ENCODE measurements at regions of chr3 and their contacts with region 1.

Region 1: GRCh38 chr3:113745273-113746068 is 578 bp downstream of the NAA50 start:
- DNase-seq: peak; percentile 57 to 77 (median 71)
- ATAC-seq: peak; percentile 52 to 73 (median 70)
- H3K4me3 ChIP-seq: peak overlapping the region; percentile 63 to 95 (median 85)
- H3K27ac ChIP-seq: peak overlapping the region; percentile 94 to 100 (median 98)
- H3K4me1 ChIP-seq: peaks cover 6 to 71% (median 36%) of the 10 kb centered on the region in 12 donors
- H3K27me3 ChIP-seq: no peaks in the 10 kb centered on the region
- CTCF ChIP-seq: peak; percentile 23 to 68 (median 59)
- POLR2A ChIP-seq: no peak

Region 2: GRCh38 chr3:113495035-113495434 is 250.4 kb before region 1 on chr3:
- intact Hi-C with region 1: loop called in 5 of 10 experiments (anchors 5 to 10 kb)
- DNase-seq: no peak
- ATAC-seq: no peak
- H3K4me3 ChIP-seq: no peak overlapping the region
- H3K27ac ChIP-seq: no peak overlapping the region
- H3K4me1 ChIP-seq: no peaks in the 10 kb centered on the region
- H3K27me3 ChIP-seq: no peaks in the 10 kb centered on the region
- CTCF ChIP-seq: peak in 11 of 12 donors; percentile 10 to 56 (median 41)
- POLR2A ChIP-seq: no peak

Region 3: GRCh38 chr3:113696658-113697499 is 48.6 kb before region 1 on chr3:
- intact Hi-C with region 1: loop called in 6 of 10 experiments (anchors 1 to 5 kb)
- DNase-seq: peak; percentile 99 to 100 (median 99)
- ATAC-seq: peak; percentile 96 to 99 (median 97)
- H3K4me3 ChIP-seq: peak overlapping the region; percentile 56 to 100 (median 87)
- H3K27ac ChIP-seq: peak overlapping the region; percentile 96 to 100 (median 100)
- H3K4me1 ChIP-seq: peaks cover 2 to 45% (median 26%) of the 10 kb centered on the region in 12 donors
- H3K27me3 ChIP-seq: no peaks in the 10 kb centered on the region
- CTCF ChIP-seq: peak in 7 of 12 donors; percentile 23 to 54 (median 29)
- POLR2A ChIP-seq: no peak

Region 4: GRCh38 chr3:113758389-113759024 is 13.0 kb after region 1 on chr3:
- intact Hi-C with region 1: no loop called
- DNase-seq: no peak
- ATAC-seq: no peak
- H3K4me3 ChIP-seq: no peak overlapping the region
- H3K27ac ChIP-seq: no peak overlapping the region
- H3K4me1 ChIP-seq: peaks cover 0 to 16% (median 2%) of the 10 kb centered on the region in 12 donors
- H3K27me3 ChIP-seq: no peaks in the 10 kb centered on the region
- CTCF ChIP-seq: no peak
- POLR2A ChIP-seq: no peak

Region 5: DNA sequence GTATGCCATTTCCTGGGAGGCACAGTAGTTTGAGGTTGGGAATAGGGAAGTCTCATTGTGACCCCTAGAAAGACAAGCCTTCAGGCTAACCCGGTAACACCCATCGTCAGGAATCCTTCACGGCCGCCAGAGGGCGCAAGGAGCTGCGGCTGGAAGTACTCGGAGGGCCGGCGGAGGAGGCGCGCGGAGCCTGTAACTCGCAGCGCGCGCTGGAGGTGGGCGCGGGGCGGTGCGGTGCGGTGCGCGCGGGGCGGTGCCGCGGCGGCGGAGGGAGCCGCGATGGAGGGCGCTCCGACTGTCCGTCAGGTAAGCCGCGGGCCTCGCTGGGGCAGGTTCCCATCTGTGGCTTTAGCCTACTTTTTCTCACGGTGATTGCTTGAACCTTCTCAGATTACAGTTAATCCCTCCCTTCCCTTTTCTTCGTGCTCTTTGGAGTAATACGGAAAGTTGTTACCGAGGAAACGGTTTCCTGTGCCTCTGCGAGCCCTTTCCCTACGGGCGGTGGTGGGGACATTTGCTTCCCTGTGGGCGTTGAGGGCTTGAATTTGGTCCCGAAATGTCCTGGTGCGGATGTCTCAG is 93.2 kb after region 1 on chr3 and contains the start of gene GRAMD1C:
- intact Hi-C with region 1: loop called in 3 of 10 experiments (anchors 2 to 10 kb)
- DNase-seq: peak; percentile 85 to 94 (median 86)
- ATAC-seq: peak; percentile 68 to 100 (median 98)
- H3K4me3 ChIP-seq: peak within 1 kb of the TSS; percentile 33 to 66 (median 56)
- H3K27ac ChIP-seq: peak within 1 kb of the TSS in 7 of 12 donors; percentile 5 to 61 (median 49)
- H3K4me1 ChIP-seq: peaks cover 0 to 8% (median 0%) of the 10 kb centered on the region in 12 donors
- H3K27me3 ChIP-seq: no peaks in the 10 kb centered on the region
- CTCF ChIP-seq: peak; percentile 71 to 94 (median 87)
- POLR2A ChIP-seq: peak in 1 of 2 donors; percentile 21
- total RNA-seq, gene GRAMD1C: 0.49 to 5.6 (median 1.2) TPM

Region 6: GRCh38 chr3:115147329-115148141 is 1402.1 kb after region 1 on chr3:
- intact Hi-C with region 1: loop called in 1 of 10 experiments (anchors 5 kb)
- DNase-seq: peak; percentile 98 to 99 (median 99)
- ATAC-seq: peak; percentile 90 to 95 (median 94)
- H3K4me3 ChIP-seq: peak overlapping the region; percentile 50 to 98 (median 86)
- H3K27ac ChIP-seq: peak overlapping the region; percentile 96 to 100 (median 98)
- H3K4me1 ChIP-seq: peaks cover 0 to 27% (median 12%) of the 10 kb centered on the region in 12 donors
- H3K27me3 ChIP-seq: no peaks in the 10 kb centered on the region
- CTCF ChIP-seq: no peak
- POLR2A ChIP-seq: peak; percentile 60 to 87